ENCODE measurements at regions of chr7 and their contacts with region 1.

Region 1: GRCh38 chr7:151244196-151244840 is 4.2 kb downstream of the SMARCD3 start:
- DNase-seq: peak in 6 of 9 donors; percentile 44 to 63 (median 54)
- ATAC-seq: peak; percentile 52
- H3K4me3 ChIP-seq: peak overlapping the region; percentile 40
- H3K4me3 Mint-ChIP-seq: peak overlapping the region; percentile 71 to 93 (median 78)
- H3K27ac ChIP-seq: no peak overlapping the region
- H3K27ac Mint-ChIP-seq: peak overlapping the region in 6 of 9 donors; percentile 9 to 90 (median 68)
- H3K4me1 ChIP-seq: peaks cover 22 to 36% of the 10 kb centered on the region in 2 donors
- H3K4me1 Mint-ChIP-seq: peaks cover 27 to 53% (median 38%) of the 10 kb centered on the region in 7 donors
- H3K27me3 ChIP-seq: peaks cover 0 to under 1% of the 10 kb centered on the region in 2 donors
- H3K27me3 Mint-ChIP-seq: peaks cover 3 to 37% (median 21%) of the 10 kb centered on the region in 5 donors

Region 2: GRCh38 chr7:149353739-149354504 is 1890.4 kb before region 1 on chr7:
- CTCF ChIA-PET with region 1: no interaction called
- POLR2A ChIA-PET with region 1: no interaction called
- intact Hi-C with region 1: no loop called
- DNase-seq: no peak
- ATAC-seq: no peak
- H3K4me3 ChIP-seq: no peak overlapping the region
- H3K4me3 Mint-ChIP-seq: no peak overlapping the region
- H3K27ac ChIP-seq: no peak overlapping the region
- H3K27ac Mint-ChIP-seq: no peak overlapping the region
- H3K4me1 ChIP-seq: no peaks in the 10 kb centered on the region
- H3K4me1 Mint-ChIP-seq: no peaks in the 10 kb centered on the region
- H3K27me3 ChIP-seq: no peaks in the 10 kb centered on the region
- H3K27me3 Mint-ChIP-seq: peaks cover 0 to 12% (median 0%) of the 10 kb centered on the region in 5 donors

Region 3: DNA sequence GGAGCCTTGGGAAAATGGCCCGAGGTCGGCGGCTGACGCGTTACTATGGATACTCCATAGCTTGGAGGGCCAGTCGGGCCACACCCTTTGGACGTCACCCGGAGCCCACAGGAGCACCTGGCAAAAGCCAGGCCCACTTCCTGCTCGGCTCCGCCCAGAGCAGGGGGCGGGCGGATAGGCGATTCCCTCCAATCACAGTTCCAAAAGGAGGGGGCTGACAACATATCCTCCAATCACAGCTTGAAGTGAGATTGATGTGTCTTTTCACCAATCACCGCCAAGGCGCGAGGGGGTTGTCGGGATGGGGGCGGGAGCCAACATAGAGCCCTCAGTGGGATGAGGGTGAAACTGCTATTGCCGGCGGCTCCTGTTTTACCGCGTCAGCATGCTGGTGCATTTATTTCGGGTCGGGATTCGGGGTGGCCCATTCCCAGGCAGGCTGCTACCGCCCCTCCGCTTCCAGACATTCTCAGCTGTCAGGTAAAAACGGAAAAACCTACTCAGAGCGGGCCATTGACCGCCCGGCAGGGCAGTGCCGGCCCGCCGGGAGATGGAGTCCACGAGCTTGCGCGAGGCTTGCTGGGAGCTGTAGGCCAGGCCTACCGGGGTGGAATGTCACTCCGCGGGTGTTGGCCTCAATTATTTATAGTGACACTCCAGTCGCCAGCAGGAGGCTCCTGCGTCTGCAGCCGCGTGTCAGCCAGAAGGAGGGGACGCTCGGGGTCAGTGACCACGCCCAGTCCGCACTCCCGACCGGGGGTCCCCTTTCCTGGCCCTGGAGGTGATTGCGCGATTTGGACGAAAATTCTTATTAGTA is 216.0 kb before region 1 on chr7 and contains the start of gene ABCB8:
- CTCF ChIA-PET with region 1: no interaction called
- POLR2A ChIA-PET with region 1: no interaction called
- intact Hi-C with region 1: no loop called
- DNase-seq: peak; percentile 89 to 100 (median 99)
- ATAC-seq: peak; percentile 94
- H3K4me3 ChIP-seq: peak within 1 kb of the TSS; percentile 78
- H3K4me3 Mint-ChIP-seq: peak within 1 kb of the TSS; percentile 83 to 98 (median 92)
- H3K27ac ChIP-seq: peak within 1 kb of the TSS; percentile 94
- H3K27ac Mint-ChIP-seq: peak within 1 kb of the TSS; percentile 95 to 100 (median 99)
- H3K4me1 ChIP-seq: peaks cover 6% of the 10 kb centered on the region in 2 donors
- H3K4me1 Mint-ChIP-seq: peaks cover 20 to 40% (median 29%) of the 10 kb centered on the region in 7 donors
- H3K27me3 ChIP-seq: no peaks in the 10 kb centered on the region
- H3K27me3 Mint-ChIP-seq: peaks cover 0 to 6% (median 0%) of the 10 kb centered on the region in 5 donors
- total RNA-seq, gene ABCB8: 59.7 to 88.0 (median 76.6) TPM

Region 4: GRCh38 chr7:151172273-151173141 is 71.8 kb before region 1 on chr7:
- CTCF ChIA-PET with region 1: no interaction called
- POLR2A ChIA-PET with region 1: no interaction called
- intact Hi-C with region 1: loop called (anchors 1 to 2 kb)
- DNase-seq: peak; percentile 59 to 88 (median 78)
- ATAC-seq: peak; percentile 97
- H3K4me3 ChIP-seq: no peak overlapping the region
- H3K4me3 Mint-ChIP-seq: no peak overlapping the region
- H3K27ac ChIP-seq: no peak overlapping the region
- H3K27ac Mint-ChIP-seq: peak overlapping the region in 1 of 9 donors; percentile 41
- H3K4me1 ChIP-seq: peaks cover 0 to 3% of the 10 kb centered on the region in 2 donors
- H3K4me1 Mint-ChIP-seq: peaks cover 5 to 16% (median 12%) of the 10 kb centered on the region in 7 donors
- H3K27me3 ChIP-seq: peaks cover 0 to 7% of the 10 kb centered on the region in 2 donors
- H3K27me3 Mint-ChIP-seq: peaks cover 42 to 62% (median 54%) of the 10 kb centered on the region in 5 donors

Region 5: DNA sequence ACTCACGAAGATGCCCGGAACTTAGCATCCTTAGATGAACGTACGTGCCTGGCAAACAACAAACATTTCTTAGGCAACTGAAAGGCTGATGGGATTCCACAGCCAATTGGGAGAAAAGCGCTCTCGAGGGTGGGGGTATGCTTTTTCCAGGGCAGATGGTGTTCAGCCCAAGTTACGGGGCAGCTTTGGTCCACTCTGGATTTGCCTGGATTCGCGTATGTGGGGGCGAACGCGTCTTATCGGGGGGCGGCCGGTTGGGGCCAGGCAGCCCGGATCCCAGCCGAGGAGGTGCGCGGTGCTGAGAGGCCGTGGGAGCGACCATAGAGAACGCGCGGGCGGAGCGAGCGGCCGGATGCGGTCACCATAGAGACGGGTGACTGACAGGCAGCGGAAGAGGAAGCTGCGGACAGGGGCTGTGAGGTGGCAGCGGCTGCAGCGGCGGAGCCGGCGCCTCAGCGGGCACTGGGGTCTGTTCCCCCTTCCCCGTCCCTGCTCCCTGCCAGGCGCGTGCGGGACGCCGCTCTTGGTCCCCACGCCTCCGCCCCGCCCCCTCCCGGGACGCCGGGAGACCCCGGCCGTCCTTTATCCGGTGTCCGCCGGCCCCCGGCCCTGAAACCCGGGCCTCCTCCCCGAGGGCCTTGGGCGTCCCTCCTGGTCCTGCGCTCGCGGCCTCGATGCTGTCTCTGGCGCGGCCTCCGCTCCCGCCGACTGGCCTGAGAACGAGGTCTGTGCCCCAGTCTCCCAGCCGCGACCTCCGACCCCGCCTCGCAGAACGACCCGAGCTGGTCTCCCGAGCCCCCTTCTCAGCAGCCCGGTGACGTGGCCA is 12.0 kb before region 1 on chr7 and contains the start of gene CHPF2:
- CTCF ChIA-PET with region 1: interaction called, 5 read pairs
- POLR2A ChIA-PET with region 1: interaction called, 10 read pairs
- intact Hi-C with region 1: loop called (anchors 1 kb)
- DNase-seq: peak; percentile 74 to 91 (median 84)
- ATAC-seq: peak; percentile 94
- H3K4me3 ChIP-seq: peak within 1 kb of the TSS; percentile 90
- H3K4me3 Mint-ChIP-seq: peak within 1 kb of the TSS; percentile 93 to 100 (median 98)
- H3K27ac ChIP-seq: peak within 1 kb of the TSS; percentile 85
- H3K27ac Mint-ChIP-seq: peak within 1 kb of the TSS; percentile 87 to 99 (median 98)
- H3K4me1 ChIP-seq: peaks cover 19 to 23% of the 10 kb centered on the region in 2 donors
- H3K4me1 Mint-ChIP-seq: peaks cover 30 to 45% (median 39%) of the 10 kb centered on the region in 7 donors
- H3K27me3 ChIP-seq: no peaks in the 10 kb centered on the region
- H3K27me3 Mint-ChIP-seq: peaks cover 0 to 6% (median 0%) of the 10 kb centered on the region in 5 donors
- total RNA-seq, gene CHPF2: 32.3 to 45.8 (median 42.8) TPM

Region 6: GRCh38 chr7:151276666-151277590 is 32.6 kb after region 1 on chr7:
- CTCF ChIA-PET with region 1: interaction called, 3 read pairs
- POLR2A ChIA-PET with region 1: no interaction called
- intact Hi-C with region 1: loop called in 1 of 2 experiments (anchors 2 kb)
- DNase-seq: peak; percentile 32 to 64 (median 55)
- ATAC-seq: peak; percentile 77
- H3K4me3 ChIP-seq: peak overlapping the region; percentile 53
- H3K4me3 Mint-ChIP-seq: peak overlapping the region; percentile 69 to 88 (median 85)
- H3K27ac ChIP-seq: peak overlapping the region; percentile 0
- H3K27ac Mint-ChIP-seq: peak overlapping the region in 8 of 9 donors; percentile 38 to 90 (median 62)
- H3K4me1 ChIP-seq: peaks cover 13 to 20% of the 10 kb centered on the region in 2 donors
- H3K4me1 Mint-ChIP-seq: peaks cover 23 to 39% (median 32%) of the 10 kb centered on the region in 7 donors
- H3K27me3 ChIP-seq: no peaks in the 10 kb centered on the region
- H3K27me3 Mint-ChIP-seq: peaks cover 0 to 32% (median 8%) of the 10 kb centered on the region in 5 donors